PC-3 (cell line): ENCODE measurements at regions of chr18 and their contacts with region 1.

Region 1: DNA sequence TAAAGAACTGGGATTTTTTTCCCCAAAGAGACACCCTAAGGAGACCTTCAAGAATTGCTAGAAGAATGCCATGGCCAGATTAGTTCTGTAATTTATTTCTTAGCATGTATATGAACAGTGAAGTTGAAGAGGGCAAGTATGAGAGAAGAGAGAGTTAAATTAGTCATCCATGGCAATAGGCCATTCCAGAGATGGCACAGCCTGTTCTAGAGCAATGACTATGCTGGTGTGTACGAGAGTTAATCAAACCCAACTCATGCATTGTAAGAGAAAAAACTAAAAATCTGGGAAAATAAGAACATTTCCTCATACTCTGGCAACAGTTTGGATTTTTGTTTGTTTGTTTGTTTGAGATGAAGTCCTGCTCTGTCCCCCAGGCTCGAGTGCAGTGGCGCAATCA is 112.1 kb upstream of the PIK3C3 start:
- DNase-seq: peak; percentile 19
- ATAC-seq: peak; percentile 31; the same call in 1 of the 2 replicates
- H3K4me3 ChIP-seq: no peak overlapping the region
- H3K27ac ChIP-seq: no peak overlapping the region
- H3K4me1 ChIP-seq: no peaks in the 10 kb centered on the region
- H3K27me3 ChIP-seq: no peaks in the 10 kb centered on the region
- CTCF ChIP-seq: no peak

Region 2: GRCh38 chr18:41875094-41875780 is 32.4 kb after region 1 on chr18:
- CTCF ChIA-PET with region 1: no interaction called
- POLR2A ChIA-PET with region 1: interaction called, 10 read pairs
- intact Hi-C with region 1: no loop called
- DNase-seq: peak; percentile 54
- ATAC-seq: peak; percentile 56
- H3K4me3 ChIP-seq: no peak overlapping the region
- H3K27ac ChIP-seq: peak overlapping the region; percentile 55
- H3K4me1 ChIP-seq: peaks cover 44% of the 10 kb centered on the region
- H3K27me3 ChIP-seq: no peaks in the 10 kb centered on the region
- CTCF ChIP-seq: no peak